IMR-90 (cell line): ENCODE measurements at regions of chr13 and their contacts with region 1.

Region 1: DNA sequence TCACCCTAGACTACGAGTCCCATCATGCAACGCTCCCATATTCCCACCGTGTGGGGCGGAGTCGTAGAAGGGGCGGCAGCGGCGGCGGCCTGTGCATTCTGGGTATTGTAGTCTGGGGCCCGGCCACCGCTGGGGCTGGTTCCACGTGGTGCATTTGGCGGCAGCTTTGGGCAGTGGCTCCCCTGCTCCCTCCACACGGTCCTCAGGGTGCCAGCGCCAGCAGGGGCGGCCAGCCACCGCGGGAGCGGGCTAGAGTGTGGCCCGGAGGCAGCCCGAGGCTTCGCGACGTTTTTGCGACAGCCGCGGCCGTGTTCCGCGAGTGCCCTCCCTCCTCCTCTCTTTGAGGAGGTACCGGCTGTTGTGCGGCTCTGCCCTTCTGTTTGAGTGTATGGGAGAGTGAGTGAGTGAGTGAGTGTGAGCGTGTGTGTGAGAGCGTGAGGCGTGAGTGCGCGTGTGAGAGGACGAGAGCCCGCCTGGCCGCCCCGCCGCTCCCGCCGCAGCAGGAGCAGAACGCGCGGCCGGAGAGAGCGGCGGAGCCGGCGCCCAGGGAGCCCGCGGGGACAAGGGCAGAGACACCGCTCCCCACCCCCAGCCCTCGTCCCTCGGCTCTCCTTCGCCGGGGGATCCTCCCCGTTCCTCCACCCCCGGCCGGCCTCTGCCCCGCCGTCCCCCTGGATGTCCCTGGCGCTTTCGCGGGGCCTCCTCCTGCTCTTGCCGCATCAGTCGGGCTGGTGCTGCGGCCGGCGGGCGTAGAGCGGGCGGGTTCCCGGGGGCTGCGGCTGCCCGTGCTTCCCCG is at the start of gene CDK8:
- DNase-seq: peak; percentile 87
- ATAC-seq: peak; percentile 95
- H3K4me3 ChIP-seq: peak within 1 kb of the TSS; percentile 82
- H3K27ac ChIP-seq: peak within 1 kb of the TSS; percentile 98
- H3K4me1 ChIP-seq: no peaks in the 10 kb centered on the region
- H3K27me3 ChIP-seq: no peaks in the 10 kb centered on the region
- CTCF ChIP-seq: no peak
- POLR2A ChIP-seq: 0 out of 2 replicates have a peak, but pooled peaks have one; percentile 37
- RAD21 ChIP-seq: no peak
- total RNA-seq, gene CDK8: 19.0 and 21.9 TPM in 2 replicates

Region 2: GRCh38 chr13:26372747-26373146 is 118.8 kb after region 1 on chr13:
- CTCF ChIA-PET with region 1: no interaction called
- POLR2A ChIA-PET with region 1: no interaction called
- dilution Hi-C with region 1: no loop called
- in situ Hi-C with region 1: no loop called
- intact Hi-C with region 1: loop called (anchors 5 kb)
- DNase-seq: no peak
- ATAC-seq: no peak
- H3K4me3 ChIP-seq: no peak overlapping the region
- H3K27ac ChIP-seq: no peak overlapping the region
- H3K4me1 ChIP-seq: no peaks in the 10 kb centered on the region; the same call in 1 of the 2 replicates
- H3K27me3 ChIP-seq: no peaks in the 10 kb centered on the region
- CTCF ChIP-seq: no peak
- POLR2A ChIP-seq: no peak
- RAD21 ChIP-seq: no peak